ENCODE measurements at regions of chr3 and their contacts with region 1.

Region 1: GRCh38 chr3:114827495-114827894 is 319.6 kb downstream of the ZBTB20 start:
- DNase-seq: peak; percentile 11 to 31 (median 28)
- ATAC-seq: peak; percentile 70; the same call in 1 of the 3 replicates
- H3K4me3 ChIP-seq: no peak overlapping the region
- H3K27ac ChIP-seq: no peak overlapping the region
- H3K4me1 ChIP-seq: no peaks in the 10 kb centered on the region
- H3K27me3 ChIP-seq: no peaks in the 10 kb centered on the region
- CTCF ChIP-seq: peak; percentile 20 to 53 (median 39); a peak in 3 of 6 replicates
- EP300 ChIP-seq: no peak
- POLR2A ChIP-seq: no peak
- RAD21 ChIP-seq: peak; percentile 77 to 79

Region 2: DNA sequence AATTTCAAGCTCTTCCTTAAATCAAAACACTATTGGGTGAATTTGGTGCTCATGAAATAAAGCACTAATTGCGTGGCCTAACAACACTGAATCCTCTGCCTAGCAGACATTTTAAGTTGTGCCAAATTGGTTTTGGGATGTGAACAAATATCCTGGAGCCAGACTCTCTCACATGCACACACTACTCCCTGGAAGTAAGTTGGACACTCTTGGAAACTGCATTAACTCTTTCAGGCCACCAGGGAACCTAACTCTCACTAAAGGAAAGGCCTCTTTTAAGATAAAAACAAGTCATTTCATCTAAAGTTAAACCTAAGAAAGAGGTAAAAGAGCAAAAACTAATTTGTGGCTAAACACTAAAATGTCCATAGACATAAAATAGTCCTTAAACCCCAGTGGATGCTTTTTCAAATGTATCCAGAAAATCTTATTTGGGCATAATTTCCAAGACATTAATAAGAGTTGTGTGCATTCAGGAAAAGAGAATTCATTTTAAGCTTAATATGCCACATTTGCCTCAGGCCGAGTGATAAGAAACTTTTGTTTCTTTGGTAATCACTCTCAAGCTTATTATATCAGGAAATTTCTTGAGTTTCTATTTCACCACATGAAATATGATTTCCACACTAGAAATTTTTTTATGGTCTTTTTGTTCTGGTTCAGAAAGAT is 257.8 kb after region 1 on chr3:
- CTCF ChIA-PET with region 1: no interaction called
- POLR2A ChIA-PET with region 1: no interaction called
- in situ Hi-C with region 1: no loop called
- intact Hi-C with region 1: loop called (anchors 10 kb)
- DNase-seq: peak in 1 of 4 experiments; percentile 0
- ATAC-seq: peak; percentile 46; the same call in 1 of the 3 replicates
- H3K4me3 ChIP-seq: no peak overlapping the region
- H3K27ac ChIP-seq: no peak overlapping the region
- H3K4me1 ChIP-seq: no peaks in the 10 kb centered on the region
- H3K27me3 ChIP-seq: no peaks in the 10 kb centered on the region
- CTCF ChIP-seq: no peak
- EP300 ChIP-seq: no peak
- POLR2A ChIP-seq: no peak
- RAD21 ChIP-seq: no peak

Region 3: DNA sequence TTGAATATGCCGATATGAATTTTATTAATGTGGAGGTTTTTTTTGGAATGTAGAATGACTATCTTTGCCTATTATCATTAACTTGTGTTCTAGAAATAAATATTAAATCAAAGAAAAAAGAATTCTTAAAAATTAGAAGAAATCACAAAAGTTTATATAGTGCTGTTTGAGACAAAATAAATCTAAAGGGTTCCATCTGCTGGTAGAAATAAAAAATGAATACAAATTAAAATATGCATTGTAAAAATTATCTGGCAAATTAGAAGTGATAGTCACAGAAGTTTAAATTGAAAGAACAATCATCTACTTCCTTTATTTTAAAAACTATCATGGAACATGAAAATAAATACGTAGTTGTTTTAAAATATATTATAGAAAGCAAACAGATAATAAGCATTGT is 342.3 kb after region 1 on chr3:
- CTCF ChIA-PET with region 1: no interaction called
- POLR2A ChIA-PET with region 1: no interaction called
- in situ Hi-C with region 1: no loop called
- intact Hi-C with region 1: loop called (anchors 10 kb)
- DNase-seq: no peak
- ATAC-seq: no peak
- H3K4me3 ChIP-seq: no peak overlapping the region
- H3K27ac ChIP-seq: no peak overlapping the region
- H3K4me1 ChIP-seq: no peaks in the 10 kb centered on the region; a peak in 1 of 5 replicates
- H3K27me3 ChIP-seq: no peaks in the 10 kb centered on the region
- CTCF ChIP-seq: peak in 1 of 3 experiments; percentile 29; a peak in 1 of 6 replicates
- EP300 ChIP-seq: no peak
- POLR2A ChIP-seq: no peak
- RAD21 ChIP-seq: peak; percentile 21 to 45; a peak in 3 of 4 replicates